GM13977 (cell line): ENCODE measurements at regions of chr17 and their contacts with region 1.

Region 1: DNA sequence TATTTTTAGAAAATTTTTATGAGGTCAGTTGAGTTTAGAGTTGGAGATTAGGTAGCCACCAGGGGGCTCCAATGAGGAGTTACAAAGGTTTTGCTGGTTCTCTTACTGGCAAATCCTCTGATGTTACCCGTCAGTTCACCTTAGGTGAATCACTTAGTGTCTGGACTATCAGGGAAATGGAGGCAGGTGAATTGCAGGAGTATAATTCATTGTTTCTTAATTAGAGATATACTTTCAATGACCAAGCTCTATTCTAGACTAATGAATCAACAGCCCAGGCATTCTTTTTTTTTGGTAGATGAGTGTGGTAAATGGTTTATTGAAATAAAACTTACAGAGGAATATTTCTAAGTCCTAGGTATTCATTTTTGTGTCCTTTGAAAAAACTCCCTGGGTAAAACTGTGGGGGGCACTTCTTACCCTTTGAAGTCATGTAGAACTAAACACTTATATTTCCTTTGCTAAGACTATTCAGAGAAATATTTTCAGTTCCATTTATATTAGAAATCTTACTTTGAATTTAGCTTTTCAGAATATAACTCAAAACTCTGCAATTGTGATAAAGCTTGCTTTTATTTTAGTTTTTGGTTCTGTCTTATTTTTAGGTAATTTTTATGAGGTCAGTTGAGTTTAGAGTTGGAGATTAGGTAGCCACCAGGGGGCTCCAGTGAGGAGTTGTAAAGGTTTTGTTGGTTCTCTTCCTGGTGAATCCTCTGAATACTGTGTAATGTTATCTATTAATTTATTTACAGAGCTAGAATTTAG is 17.7 kb downstream of the PSMD11 start:
- DNase-seq: peak; percentile 53
- CTCF ChIP-seq: peak; percentile 54

Region 2: GRCh38 chr17:32936894-32937500 is 475.0 kb after region 1 on chr17:
- in situ Hi-C with region 1: loop called (anchors 25 kb)
- DNase-seq: peak; percentile 82
- CTCF ChIP-seq: peak; percentile 89